H1 (cell line): ENCODE measurements at regions of chr10 and their contacts with region 1.

Region 1: GRCh38 chr10:97204826-97205679 is 19.3 kb upstream of the SLIT1 start:
- DNase-seq: no peak
- H3K4me3 ChIP-seq: no peak overlapping the region
- H3K27ac ChIP-seq: no peak overlapping the region
- H3K4me1 ChIP-seq: no peaks in the 10 kb centered on the region
- H3K27me3 ChIP-seq: no peaks in the 10 kb centered on the region
- CTCF ChIP-seq: no peak
- EP300 ChIP-seq: no peak
- POLR2A ChIP-seq: no peak
- RAD21 ChIP-seq: no peak

Region 2: GRCh38 chr10:97010695-97011206 is 194.3 kb before region 1 on chr10:
- CTCF ChIA-PET with region 1: no interaction called
- POLR2A ChIA-PET with region 1: no interaction called
- DNase-seq: peak in 1 of 2 experiments; percentile 32
- H3K4me3 ChIP-seq: no peak overlapping the region
- H3K27ac ChIP-seq: no peak overlapping the region
- H3K4me1 ChIP-seq: peaks cover 0 to 4% (median 1%) of the 10 kb centered on the region in 4 experiments; a peak in 4 of 7 replicates
- H3K27me3 ChIP-seq: no peaks in the 10 kb centered on the region
- CTCF ChIP-seq: no peak
- EP300 ChIP-seq: no peak
- POLR2A ChIP-seq: no peak
- RAD21 ChIP-seq: no peak

Region 3: GRCh38 chr10:97179731-97180362 is 25.2 kb before region 1 on chr10:
- CTCF ChIA-PET with region 1: interaction called, 141 read pairs
- POLR2A ChIA-PET with region 1: no interaction called
- DNase-seq: peak; percentile 31 to 87
- H3K4me3 ChIP-seq: peak overlapping the region in 3 of 4 experiments; percentile 16 to 48 (median 27); a peak in 5 of 8 replicates
- H3K27ac ChIP-seq: no peak overlapping the region
- H3K4me1 ChIP-seq: peaks cover under 1 to 3% (median 2%) of the 10 kb centered on the region in 4 experiments; a peak in 6 of 7 replicates
- H3K27me3 ChIP-seq: peaks cover 10 to 30% (median 22%) of the 10 kb centered on the region in 4 experiments
- CTCF ChIP-seq: peak; percentile 80 to 84 (median 83)
- EP300 ChIP-seq: no peak
- POLR2A ChIP-seq: no peak
- RAD21 ChIP-seq: peak; percentile 80 to 88

Region 4: DNA sequence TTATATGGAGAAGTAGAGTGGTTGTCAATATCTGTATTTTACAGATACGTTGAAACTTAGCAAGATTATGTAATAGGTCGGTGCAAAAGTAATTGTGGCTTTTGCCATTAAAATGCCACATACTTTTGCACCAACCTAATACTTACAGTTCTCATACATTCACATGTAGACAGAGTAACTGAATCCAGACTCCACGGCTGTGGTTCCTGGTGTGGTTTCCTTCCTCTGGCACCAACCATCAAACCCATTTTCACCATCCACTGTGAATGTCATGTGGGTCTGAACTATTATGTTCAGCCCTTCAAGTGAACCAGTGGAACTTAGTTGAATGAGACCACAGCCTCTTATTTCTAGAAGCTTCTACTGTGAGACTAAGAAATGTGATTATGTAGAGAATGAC is 12.2 kb after region 1 on chr10:
- CTCF ChIA-PET with region 1: interaction called, 23 read pairs
- POLR2A ChIA-PET with region 1: interaction called, 6 read pairs
- DNase-seq: no peak
- H3K4me3 ChIP-seq: no peak overlapping the region
- H3K27ac ChIP-seq: no peak overlapping the region
- H3K4me1 ChIP-seq: peaks cover 0 to 4% (median under 1%) of the 10 kb centered on the region in 4 experiments; a peak in 2 of 7 replicates
- H3K27me3 ChIP-seq: no peaks in the 10 kb centered on the region
- CTCF ChIP-seq: no peak
- EP300 ChIP-seq: no peak
- POLR2A ChIP-seq: no peak
- RAD21 ChIP-seq: no peak